PC-9 (cell line): ENCODE measurements at regions of chr1 and their contacts with region 1.

Region 1: DNA sequence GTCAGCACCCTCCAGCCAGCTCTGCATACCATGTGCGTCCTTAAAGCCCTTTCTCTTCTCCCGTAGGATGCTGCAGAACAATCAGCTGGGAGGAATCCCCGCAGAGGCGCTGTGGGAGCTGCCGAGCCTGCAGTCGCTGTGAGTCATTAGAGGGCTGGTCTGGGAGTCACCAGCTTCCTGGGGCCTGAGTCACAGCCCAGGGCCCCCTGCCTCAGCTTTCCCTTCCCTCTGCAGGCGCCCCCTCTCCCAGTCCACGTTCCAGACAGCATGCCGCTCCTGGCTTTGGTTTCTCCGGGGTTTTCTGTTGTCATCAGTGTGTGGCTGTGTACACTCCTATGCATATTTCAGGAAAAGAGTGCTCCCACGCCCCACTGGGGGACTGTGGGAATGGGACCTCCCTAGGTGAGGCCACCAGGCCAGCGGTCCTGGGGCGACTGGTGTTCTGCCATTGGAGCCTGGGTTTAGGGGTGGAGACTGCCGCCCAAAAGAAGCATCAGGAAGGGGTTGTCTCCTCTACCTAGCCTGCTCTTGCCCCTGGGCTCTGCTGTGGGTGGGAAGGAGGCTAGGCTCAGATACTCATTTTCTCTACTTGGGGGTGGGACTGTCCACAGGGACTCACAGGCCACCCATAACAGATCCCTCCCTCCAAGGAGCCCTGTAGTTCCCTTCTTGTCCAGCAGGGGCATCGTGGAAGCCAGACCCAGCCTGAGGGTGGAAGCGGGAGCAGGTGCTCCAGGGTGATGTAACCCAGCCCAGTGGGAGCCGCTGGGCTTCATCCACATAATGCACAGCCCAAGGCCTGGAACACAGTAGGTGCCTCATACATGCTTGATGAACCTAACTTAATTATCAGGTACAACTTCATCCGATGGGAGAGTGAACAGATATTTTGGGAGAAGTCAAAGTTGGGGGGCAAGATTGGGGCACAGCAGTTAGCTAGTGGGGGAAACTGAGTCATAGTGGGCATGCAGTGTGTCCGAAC is 42.5 kb downstream of the LGR6 start:
- DNase-seq: peak; percentile 92 to 96
- H3K4me3 ChIP-seq: peak overlapping the region; percentile 44; the same call in 1 of the 2 replicates
- H3K27ac ChIP-seq: peak overlapping the region; percentile 80
- H3K4me1 ChIP-seq: peaks cover 25% of the 10 kb centered on the region
- H3K27me3 ChIP-seq: no peaks in the 10 kb centered on the region
- CTCF ChIP-seq: peak; percentile 97

Region 2: DNA sequence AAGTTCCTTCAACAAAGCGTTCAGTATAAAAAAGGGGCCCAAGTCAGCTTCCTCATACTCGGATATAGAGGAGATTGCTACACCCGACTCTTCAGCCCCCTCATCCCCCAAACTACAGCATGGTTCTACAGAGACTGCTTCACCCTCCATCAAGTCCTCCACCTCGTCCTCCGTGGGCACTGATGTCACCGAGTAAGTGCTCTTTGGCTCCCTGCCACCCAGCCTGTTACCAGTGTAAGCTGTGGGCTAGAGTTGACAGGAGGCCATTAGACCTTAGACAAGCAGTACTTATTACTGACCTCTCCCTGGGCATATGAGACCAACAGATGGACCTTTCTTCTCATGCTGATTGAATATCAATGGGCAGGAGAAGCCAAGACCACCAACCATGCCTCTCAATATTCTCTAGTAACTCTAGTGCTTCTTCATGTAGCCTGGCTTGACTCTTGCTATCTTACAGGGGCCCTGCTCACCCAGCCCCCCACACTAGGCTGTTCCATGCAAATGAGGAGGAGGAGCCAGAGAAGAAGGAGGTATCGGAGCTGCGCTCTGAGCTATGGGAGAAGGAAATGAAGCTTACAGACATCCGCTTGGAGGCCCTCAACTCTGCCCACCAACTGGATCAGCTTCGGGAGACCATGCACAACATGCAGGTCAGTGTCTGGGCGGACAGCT is 428.1 kb before region 1 on chr1:
- CTCF ChIA-PET with region 1: no interaction called
- POLR2A ChIA-PET with region 1: no interaction called
- intact Hi-C with region 1: no loop called
- DNase-seq: no peak
- H3K4me3 ChIP-seq: no peak overlapping the region
- H3K27ac ChIP-seq: no peak overlapping the region
- H3K4me1 ChIP-seq: no peaks in the 10 kb centered on the region
- H3K27me3 ChIP-seq: no peaks in the 10 kb centered on the region
- CTCF ChIP-seq: no peak

Region 3: DNA sequence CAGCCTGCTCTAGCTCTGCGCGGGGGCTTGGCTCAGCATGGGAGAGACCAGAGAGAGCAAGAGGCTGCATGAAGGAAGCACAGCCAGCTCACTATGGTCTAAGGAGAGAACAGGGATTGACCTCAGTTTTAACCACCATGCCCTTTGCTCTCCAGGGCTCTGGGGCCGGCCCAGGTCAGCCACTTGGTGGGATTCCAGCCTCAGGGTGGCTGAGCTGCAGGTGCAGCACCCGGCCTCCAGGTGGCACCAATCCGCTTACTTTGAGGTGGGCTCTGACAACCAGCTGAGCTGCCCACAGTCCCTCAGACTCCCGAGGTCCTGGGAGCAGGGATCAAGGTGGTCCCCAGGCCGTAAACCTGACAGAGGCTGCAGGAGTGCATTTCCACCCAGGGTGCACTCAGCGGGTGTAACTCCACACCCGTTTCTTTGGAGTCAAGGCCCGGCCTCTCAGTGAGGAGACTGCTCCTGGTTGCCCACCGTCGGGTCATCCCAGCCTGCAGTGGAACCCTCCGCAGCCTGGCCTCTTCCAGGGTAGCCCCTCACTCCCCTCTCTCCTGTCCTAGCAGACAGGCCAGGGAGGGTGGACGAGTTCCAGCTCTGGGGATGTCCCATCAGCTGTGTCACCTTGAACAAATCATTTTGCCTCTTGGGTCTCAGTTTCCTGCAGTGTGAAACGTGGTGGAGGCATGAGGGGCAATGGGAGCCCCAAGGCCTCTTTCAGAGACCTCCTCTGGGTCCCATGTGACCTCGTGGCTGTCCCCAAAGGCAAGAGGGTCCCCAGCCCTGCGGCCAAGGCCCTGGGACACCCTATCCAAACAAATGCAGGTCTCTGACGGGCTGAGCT is 43.2 kb before region 1 on chr1:
- CTCF ChIA-PET with region 1: interaction called, 8 read pairs
- POLR2A ChIA-PET with region 1: no interaction called
- intact Hi-C with region 1: loop called (anchors 1 kb)
- DNase-seq: peak; percentile 41 to 71
- H3K4me3 ChIP-seq: no peak overlapping the region
- H3K27ac ChIP-seq: no peak overlapping the region
- H3K4me1 ChIP-seq: peaks cover 5% of the 10 kb centered on the region
- H3K27me3 ChIP-seq: peaks cover 7% of the 10 kb centered on the region; the same call in 1 of the 2 replicates
- CTCF ChIP-seq: peak; percentile 92

Region 4: GRCh38 chr1:202221911-202222909 is 13.9 kb before region 1 on chr1:
- CTCF ChIA-PET with region 1: interaction called, 3 read pairs
- POLR2A ChIA-PET with region 1: no interaction called
- intact Hi-C with region 1: loop called (anchors 1 kb)
- DNase-seq: peak; percentile 73 to 74
- H3K4me3 ChIP-seq: 0 out of 2 replicates have a peak overlapping the region, but pooled peaks have one; percentile 15
- H3K27ac ChIP-seq: no peak overlapping the region
- H3K4me1 ChIP-seq: peaks cover 21% of the 10 kb centered on the region
- H3K27me3 ChIP-seq: peaks cover 16% of the 10 kb centered on the region; the same call in 1 of the 2 replicates
- CTCF ChIP-seq: no peak

Region 5: DNA sequence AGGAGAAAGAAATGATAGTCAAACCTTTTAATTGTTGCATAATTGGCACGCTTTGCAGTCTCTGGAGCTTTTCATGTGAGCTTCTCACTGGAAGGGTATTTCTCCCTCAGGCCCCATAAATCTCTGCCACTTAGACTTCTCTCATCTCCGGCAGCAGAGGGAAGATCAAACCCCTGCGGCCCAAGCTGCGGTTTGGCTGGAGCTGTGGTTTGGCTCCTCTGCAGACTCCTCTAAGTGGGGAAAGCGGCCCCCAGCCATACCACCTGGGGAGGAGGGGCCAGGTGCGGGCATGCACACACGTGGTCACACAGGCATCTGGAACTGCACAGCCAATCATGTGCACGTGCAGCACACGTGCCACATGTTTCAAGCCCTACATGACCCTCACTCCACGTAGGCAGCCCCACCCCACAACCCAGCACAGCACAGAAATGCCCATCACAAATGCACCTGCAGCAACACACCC is 47.3 kb after region 1 on chr1:
- CTCF ChIA-PET with region 1: no interaction called
- POLR2A ChIA-PET with region 1: interaction called, 39 read pairs
- intact Hi-C with region 1: loop called (anchors 2 kb)
- DNase-seq: peak; percentile 88 to 91
- H3K4me3 ChIP-seq: no peak overlapping the region
- H3K27ac ChIP-seq: peak overlapping the region; percentile 39; the same call in 1 of the 2 replicates
- H3K4me1 ChIP-seq: peaks cover 39% of the 10 kb centered on the region
- H3K27me3 ChIP-seq: no peaks in the 10 kb centered on the region
- CTCF ChIP-seq: no peak